ENCODE measurements at regions of chr17 and their contacts with region 1.

Region 1: DNA sequence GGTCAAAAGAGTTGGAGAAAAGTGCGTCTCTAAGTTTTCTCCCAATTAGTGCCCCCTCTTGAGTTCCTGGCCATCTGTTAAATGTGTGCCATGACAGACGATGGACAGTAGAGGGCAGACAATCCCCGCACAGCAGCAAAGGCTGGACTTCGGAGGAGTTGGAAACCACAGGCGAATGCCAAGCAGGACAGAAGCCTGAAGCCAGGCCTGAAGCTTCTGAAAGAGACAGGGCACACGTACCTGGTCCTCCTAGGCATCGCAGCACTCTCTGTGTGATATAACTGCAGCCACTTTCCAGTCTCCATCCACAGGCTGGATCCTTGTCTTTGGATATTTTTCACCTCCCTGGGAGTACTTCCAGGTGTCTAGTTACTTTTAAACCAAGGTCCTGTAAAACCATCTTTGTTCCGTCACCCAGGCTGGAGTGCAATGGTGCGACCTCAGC is 14.5 kb downstream of the C17orf100 start:
- DNase-seq: peak; percentile 81
- ATAC-seq: peak; percentile 94

Region 2: GRCh38 chr17:6713130-6713917 is 47.2 kb after region 1 on chr17 and contains the start of gene SLC13A5:
- intact Hi-C with region 1: no loop called
- DNase-seq: no peak
- ATAC-seq: no peak
- total RNA-seq, gene SLC13A5: 0.62 TPM

Region 3: DNA sequence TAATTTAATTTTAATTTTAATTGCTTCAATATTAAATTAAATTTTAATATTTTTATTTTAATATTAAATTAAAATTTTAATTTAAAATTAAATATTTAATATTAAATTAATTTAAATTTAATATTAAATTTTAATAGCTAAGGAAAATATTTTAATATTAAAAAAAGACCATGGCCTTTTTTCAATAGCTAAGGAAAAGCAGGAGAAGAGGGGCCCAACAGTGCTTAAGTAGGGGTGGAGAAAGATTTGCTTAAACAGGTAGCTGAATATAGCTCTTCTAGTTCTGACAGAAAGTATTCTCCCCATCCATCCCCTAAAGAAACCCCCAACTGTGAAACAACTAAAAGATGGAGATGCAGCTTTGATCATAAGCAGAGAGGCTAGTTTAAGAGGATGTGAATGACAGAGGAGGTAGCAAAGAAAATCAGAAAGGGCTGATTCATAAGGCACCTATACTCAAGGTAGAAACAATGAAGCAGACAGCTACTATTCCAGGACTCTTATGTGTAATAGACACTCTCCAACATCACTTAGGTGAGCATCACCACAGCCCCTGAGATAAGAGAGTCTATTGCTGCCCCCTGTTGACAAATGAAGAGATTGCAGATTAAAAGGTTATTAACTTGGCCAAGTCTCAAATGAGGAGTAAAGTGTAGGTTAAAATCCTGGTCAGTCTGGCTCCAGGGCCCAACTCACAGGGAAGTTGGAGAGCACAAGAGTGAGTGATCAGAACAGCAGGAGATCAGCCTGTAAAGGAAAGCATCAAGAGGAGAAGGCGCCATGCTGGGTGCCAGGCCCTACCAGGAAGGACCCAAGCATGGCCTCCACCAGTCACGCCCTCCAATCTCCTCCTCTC is 338.5 kb after region 1 on chr17:
- intact Hi-C with region 1: loop called (anchors 10 kb)
- DNase-seq: no peak
- ATAC-seq: peak; percentile 75